Posterior vena cava (tissue), 2 donors: ENCODE measurements at regions of chr10 and their contacts with region 1.

Region 1: GRCh38 chr10:80158598-80159127 is 26.1 kb downstream of the PLAC9 start:
- DNase-seq: peak; percentile 95

Region 2: DNA sequence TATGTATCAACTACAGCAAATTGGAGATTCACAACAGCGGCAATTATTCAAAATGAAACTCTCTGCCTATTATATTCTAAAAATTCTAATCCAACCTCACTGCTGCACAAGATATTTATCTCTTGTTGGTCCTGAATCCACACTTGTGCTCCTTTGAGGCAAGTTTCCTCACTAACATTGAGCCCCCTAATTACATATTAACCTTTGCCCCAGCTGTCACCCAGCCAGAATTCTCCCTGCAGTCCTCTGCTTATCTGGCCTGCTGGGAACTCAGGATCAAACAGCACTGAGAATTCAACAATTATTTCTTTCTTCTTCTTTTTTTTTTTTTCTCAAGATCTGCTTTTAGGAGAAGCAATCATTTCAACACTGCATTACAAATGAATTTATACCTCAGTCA is 47.7 kb before region 1 on chr10:
- intact Hi-C with region 1: no loop called
- DNase-seq: no peak

Region 3: DNA sequence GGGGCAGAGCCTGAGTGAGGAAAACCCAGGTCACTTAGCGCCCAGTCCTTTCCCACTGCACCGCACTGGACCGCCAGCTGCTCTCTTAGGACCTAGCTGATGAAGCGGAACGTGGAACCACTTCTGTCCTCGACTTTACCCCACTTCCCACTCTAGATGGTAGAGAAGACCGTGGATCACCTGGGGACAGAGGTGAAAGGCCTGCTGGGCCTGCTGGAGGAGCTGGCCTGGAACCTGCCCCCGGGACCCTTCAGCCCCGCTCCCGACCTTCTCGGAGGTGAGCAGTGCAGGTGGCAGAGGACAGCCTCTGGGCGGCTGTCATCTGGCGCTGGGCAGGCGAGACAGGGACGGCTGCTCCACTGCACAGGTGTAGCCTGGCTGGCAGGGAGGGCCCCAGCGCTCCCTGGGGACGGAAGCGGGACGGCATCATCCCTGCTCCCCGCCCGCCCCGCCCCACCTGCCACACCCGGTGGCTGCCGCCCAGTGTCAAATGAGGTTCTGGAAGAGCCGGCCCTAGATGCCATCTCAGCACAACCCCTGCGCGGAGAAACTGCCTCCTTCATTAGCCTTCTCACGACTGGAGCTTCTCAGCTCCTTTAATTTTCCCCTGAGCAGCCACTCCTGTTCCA is 14.5 kb before region 1 on chr10:
- intact Hi-C with region 1: loop called in 1 of 2 experiments (anchors 1 kb)
- DNase-seq: peak; percentile 78

Region 4: GRCh38 chr10:80205478-80206276 is 47.0 kb after region 1 on chr10 and contains the start of gene ANXA11:
- intact Hi-C with region 1: loop called (anchors 2 to 5 kb)
- DNase-seq: peak; percentile 93
- total RNA-seq, gene ANXA11: 247 to 269 TPM